Activated CD4-positive, alpha-beta memory T cell treated with anti-CD3 and anti-CD28 coated beads for 36 hours (primary cell): ENCODE measurements at regions of chr1 and their contacts with region 1.

Region 1: DNA sequence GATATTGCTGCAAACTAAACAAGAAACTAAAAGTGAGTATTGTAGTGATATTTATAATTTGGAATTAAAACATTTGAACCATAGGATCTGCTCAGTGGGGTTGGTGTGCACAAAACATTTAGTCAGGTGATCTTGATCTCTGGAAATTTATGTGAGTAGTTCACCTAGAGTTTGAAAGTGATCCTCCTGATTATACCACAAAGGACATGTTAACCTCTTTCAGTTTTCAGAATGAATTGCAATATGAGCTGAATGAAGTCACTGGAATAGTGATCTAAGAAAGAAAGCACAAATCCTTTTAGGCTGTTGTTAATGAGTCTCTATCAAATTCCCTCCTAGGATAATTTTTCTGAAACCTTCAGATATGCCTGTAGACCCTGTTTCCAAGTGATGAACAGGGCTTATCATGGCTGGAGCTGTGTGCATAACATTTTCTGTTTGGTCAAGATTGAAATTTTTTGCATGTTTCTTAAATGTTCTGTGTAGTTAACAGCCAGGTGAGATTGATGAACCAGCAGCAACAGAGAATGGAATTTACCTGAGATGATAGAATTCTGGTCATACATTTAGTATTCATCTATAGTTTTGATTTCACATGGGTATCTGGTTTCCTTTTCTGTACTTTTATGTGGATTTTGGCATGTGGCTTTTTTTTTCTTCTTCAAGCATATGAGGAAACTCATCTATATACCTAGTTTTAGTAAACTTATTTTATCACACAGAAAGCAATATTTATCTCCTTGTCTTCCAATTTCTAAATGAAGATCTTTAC is 25.5 kb downstream of the CDC14A start:
- DNase-seq: no peak
- H3K4me3 Mint-ChIP-seq: no peak overlapping the region
- H3K27ac Mint-ChIP-seq: peak overlapping the region; percentile 85
- H3K4me1 Mint-ChIP-seq: peaks cover 71% of the 10 kb centered on the region
- H3K27me3 Mint-ChIP-seq: no peaks in the 10 kb centered on the region

Region 2: GRCh38 chr1:100358210-100358609 is 19.6 kb before region 1 on chr1:
- CTCF ChIA-PET with region 1: interaction called, 22 read pairs
- POLR2A ChIA-PET with region 1: no interaction called
- intact Hi-C with region 1: no loop called
- DNase-seq: no peak
- H3K4me3 Mint-ChIP-seq: no peak overlapping the region
- H3K27ac Mint-ChIP-seq: peak overlapping the region; percentile 59
- H3K4me1 Mint-ChIP-seq: peaks cover 80% of the 10 kb centered on the region
- H3K27me3 Mint-ChIP-seq: no peaks in the 10 kb centered on the region

Region 3: GRCh38 chr1:100400404-100400803 is 22.6 kb after region 1 on chr1:
- CTCF ChIA-PET with region 1: no interaction called
- POLR2A ChIA-PET with region 1: interaction called, 8 read pairs
- intact Hi-C with region 1: loop called (anchors 2 kb)
- DNase-seq: peak; percentile 67
- H3K4me3 Mint-ChIP-seq: peak overlapping the region; percentile 53
- H3K27ac Mint-ChIP-seq: peak overlapping the region; percentile 91
- H3K4me1 Mint-ChIP-seq: peaks cover 83% of the 10 kb centered on the region
- H3K27me3 Mint-ChIP-seq: no peaks in the 10 kb centered on the region

Region 4: DNA sequence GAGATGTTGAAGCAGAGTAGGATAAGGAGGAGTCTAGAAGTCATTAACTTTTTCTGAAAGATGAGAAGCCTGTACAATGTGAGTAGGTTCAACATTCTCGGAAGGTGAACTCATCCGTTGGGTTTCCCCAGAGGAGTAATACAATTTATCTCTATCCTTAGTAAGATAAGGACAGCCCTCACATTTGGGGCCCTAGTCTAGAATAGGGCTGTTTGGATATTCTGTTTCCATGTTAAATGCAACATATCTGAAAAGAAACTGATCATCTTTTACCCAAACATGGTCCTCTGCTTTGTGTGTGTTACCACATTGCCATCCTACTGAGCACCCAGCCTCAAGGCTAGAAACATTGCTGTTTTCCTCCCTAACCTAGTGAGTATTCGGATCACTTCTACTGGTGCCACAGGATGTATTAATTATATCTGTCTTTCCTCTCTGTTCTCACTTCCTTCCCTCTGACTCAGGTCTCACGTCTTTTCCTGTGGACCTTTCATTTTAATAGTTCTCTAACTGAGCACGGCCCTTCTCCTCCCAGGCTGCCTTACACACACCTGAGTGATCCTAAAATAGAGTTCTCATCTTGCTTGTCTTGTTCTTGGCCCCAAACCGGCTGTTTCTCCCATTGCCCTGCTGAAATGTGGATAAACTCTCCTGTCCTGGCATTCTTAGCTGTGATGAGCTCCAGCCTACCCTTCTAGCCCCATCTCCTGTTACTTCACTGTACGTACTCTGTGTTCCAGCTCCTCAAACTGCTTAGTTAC is 66.2 kb after region 1 on chr1:
- CTCF ChIA-PET with region 1: interaction called, 3 read pairs
- POLR2A ChIA-PET with region 1: interaction called, 3 read pairs
- intact Hi-C with region 1: loop called (anchors 1 kb)
- DNase-seq: peak; percentile 65
- H3K4me3 Mint-ChIP-seq: peak overlapping the region; percentile 82
- H3K27ac Mint-ChIP-seq: peak overlapping the region; percentile 98
- H3K4me1 Mint-ChIP-seq: peaks cover 84% of the 10 kb centered on the region
- H3K27me3 Mint-ChIP-seq: no peaks in the 10 kb centered on the region